ENCODE measurements at regions of chr19 and their contacts with region 1.

Region 1: GRCh38 chr19:13093407-13094105 is 9.1 kb downstream of the LYL1 start:
- DNase-seq: peak; percentile 52
- H3K4me3 ChIP-seq: no peak overlapping the region
- H3K27ac ChIP-seq: no peak overlapping the region
- H3K4me1 ChIP-seq: peaks cover 2% of the 10 kb centered on the region
- H3K27me3 ChIP-seq: no peaks in the 10 kb centered on the region
- CTCF ChIP-seq: peak; percentile 80 to 89

Region 2: DNA sequence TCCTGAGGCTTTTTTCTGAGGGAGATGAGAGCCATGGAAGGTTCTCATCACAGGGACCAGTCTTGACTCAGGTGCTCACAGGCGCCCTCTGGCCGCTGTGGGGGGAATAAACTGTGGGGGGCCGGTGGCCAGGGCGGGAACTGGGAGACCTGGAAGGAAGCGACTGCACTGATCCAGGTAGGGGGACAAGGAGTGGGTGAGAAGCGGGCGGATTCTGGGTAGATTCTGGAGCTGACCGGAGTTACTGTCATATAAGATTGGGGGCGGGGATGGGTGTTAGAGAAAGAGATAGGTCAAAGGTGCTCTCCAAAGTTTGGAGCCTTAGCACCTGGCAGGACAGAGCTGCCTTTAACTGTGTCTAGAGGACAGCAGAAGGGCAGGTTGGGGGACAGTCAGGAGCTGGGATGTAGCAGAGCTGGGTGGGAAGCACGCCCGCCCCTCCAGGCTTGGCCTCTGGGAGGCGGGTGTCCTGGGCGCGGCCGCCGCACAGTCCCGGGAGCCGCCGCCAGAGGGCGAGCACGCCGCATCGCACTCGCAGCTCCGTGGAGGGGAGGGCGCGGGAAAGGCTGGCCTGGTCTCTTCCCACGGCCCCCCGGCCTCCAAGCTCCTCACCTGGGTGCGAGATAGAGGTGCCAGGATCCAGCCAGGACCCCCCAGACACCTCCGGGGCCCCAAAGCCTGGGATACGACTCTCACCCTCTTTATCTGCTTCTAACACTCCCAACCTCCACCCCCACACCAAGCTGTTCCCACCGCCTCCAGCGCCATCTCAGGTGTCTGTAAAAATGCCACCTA is 128.3 kb before region 1 on chr19:
- CTCF ChIA-PET with region 1: interaction called, 15 read pairs
- dilution Hi-C with region 1: no loop called
- in situ Hi-C with region 1: loop called in 1 of 2 experiments (anchors 10 kb)
- intact Hi-C with region 1: no loop called
- DNase-seq: peak; percentile 65
- H3K4me3 ChIP-seq: peak overlapping the region; percentile 44 to 53 (median 47)
- H3K27ac ChIP-seq: peak overlapping the region; percentile 15
- H3K4me1 ChIP-seq: peaks cover 9% of the 10 kb centered on the region
- H3K27me3 ChIP-seq: no peaks in the 10 kb centered on the region
- CTCF ChIP-seq: peak; percentile 82 to 96

Region 3: DNA sequence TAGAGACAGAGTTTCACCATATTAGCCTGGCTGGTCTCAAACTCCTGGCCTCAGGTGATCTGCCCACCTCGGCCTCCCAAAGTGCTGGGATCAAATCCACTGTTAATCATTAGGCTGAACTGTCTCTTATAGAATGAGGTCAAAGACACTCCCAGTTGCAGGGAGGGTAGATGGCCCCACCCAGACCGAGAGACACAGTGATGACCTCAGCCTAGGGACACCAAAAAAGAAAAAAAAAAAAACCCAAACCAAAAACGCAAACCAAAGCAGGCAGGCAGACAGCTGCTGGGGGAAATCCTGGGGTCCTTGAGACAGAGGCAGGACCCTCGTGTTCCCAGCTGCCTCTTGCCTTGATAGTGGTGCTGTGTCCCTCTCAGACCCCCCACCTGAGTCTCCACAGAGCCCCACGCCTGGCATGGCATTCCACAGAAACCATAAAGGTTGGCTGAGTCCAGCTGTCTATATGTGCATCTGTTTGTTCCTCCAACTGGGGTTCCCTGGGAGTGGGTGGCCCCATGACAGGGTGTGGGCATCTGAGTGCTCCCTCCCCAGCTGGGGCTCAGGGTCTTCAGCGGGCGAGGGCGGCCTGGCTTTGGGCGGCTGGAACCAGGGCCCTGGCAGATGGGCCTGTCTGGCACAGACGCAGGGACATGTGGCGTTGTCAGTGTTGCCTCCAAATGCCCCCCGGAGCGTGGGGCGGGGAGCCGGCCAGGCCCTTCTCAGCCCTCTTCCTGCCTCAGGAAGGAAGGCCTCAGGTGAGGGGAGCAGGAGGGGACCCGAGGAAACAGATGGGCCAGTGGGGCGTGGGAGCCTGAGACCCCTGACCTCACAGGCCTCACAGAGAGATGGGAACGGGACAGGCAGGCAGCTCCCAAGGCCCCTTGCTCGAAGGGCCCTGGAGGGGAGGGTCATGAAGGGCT is 119.0 kb before region 1 on chr19:
- CTCF ChIA-PET with region 1: interaction called, 9 read pairs
- dilution Hi-C with region 1: no loop called
- in situ Hi-C with region 1: loop called (anchors 5 to 10 kb)
- intact Hi-C with region 1: loop called (anchors 1 kb)
- DNase-seq: no peak
- H3K4me3 ChIP-seq: no peak overlapping the region
- H3K27ac ChIP-seq: no peak overlapping the region
- H3K4me1 ChIP-seq: no peaks in the 10 kb centered on the region
- H3K27me3 ChIP-seq: peaks cover 3% of the 10 kb centered on the region
- CTCF ChIP-seq: no peak

Region 4: DNA sequence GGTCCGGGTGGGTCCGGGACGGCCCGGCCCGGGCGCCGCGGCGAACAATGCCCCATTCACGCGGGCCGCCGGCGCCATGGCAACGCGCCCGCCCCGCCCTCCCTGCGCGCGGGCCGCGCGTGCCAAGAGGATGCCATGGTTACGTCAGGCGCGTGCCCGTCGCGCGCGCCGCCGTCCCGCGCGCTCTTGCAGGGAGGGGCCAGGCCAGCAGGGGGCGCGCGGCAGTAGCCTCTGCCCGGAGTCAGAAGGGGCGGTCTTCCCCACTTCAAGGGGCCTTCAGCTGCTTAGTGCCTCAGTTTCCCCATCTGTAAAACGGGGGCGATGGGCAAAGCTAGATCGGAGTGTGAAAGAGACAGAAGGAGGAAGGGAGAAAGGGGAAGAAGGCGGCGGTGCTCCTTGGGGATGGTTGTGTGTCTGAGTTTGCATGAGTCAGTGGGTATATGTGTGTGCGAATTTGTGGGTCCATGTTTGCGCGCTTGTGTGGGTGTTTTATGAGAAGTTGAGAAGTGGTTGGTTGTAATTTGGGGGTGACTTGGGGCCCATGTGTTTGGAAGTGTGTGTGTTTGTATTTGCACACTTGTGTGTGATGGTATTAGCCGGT is 109.9 kb before region 1 on chr19:
- CTCF ChIA-PET with region 1: no interaction called
- dilution Hi-C with region 1: no loop called
- in situ Hi-C with region 1: loop called (anchors 5 to 10 kb)
- intact Hi-C with region 1: loop called (anchors 1 kb)
- DNase-seq: peak; percentile 73
- H3K4me3 ChIP-seq: peak overlapping the region in 1 of 3 experiments; percentile 34
- H3K27ac ChIP-seq: peak overlapping the region; percentile 50
- H3K4me1 ChIP-seq: peaks cover 5% of the 10 kb centered on the region
- H3K27me3 ChIP-seq: no peaks in the 10 kb centered on the region
- CTCF ChIP-seq: peak; percentile 73 to 91

Region 5: DNA sequence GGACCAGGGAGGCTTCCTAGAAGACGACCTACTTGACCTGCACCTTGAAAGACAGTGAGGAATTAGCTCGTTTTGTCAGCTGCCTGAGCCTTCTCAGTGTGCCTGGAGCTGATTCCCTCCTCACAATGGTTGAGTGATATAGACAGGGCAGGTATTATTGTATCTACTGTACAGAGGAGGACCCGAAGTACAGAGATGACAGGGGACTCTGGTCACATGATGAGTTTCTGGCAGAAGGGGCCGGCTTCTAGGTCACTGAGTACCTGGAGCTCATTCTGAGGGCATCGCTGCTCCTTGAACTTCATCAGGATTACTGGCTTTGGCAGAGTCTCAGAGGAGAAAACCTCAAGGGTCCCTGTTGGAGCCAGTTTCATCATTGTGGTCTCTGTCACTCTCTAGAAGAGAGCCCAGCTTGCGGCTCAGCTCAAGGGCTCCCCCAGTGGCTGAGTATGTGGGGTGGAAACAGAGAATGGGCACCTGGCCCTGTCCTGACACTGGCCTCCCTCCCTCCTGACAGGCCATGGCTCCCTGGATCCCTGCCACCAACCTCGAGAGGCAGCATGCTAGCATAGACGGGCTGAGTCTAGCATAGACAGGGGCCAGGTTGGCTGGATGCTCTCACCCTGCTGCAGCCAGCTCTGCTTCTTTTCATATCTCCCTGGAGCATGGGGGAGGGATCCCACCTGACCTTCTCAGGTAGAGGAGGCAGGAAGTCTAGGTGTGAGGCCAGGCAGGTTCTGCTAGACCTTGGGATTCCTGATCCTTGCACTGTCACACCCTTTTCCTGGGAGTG is 59.5 kb before region 1 on chr19:
- CTCF ChIA-PET with region 1: interaction called, 3 read pairs
- dilution Hi-C with region 1: no loop called
- in situ Hi-C with region 1: no loop called
- intact Hi-C with region 1: loop called (anchors 2 kb)
- DNase-seq: peak; percentile 68
- H3K4me3 ChIP-seq: peak overlapping the region in 1 of 3 experiments; percentile 8
- H3K27ac ChIP-seq: peak overlapping the region; percentile 97
- H3K4me1 ChIP-seq: peaks cover 93% of the 10 kb centered on the region
- H3K27me3 ChIP-seq: no peaks in the 10 kb centered on the region
- CTCF ChIP-seq: peak; percentile 92 to 94

Region 6: GRCh38 chr19:13060964-13061927 is 32.3 kb before region 1 on chr19:
- CTCF ChIA-PET with region 1: no interaction called
- dilution Hi-C with region 1: no loop called
- in situ Hi-C with region 1: no loop called
- intact Hi-C with region 1: loop called (anchors 2 kb)
- DNase-seq: peak; percentile 67
- H3K4me3 ChIP-seq: peak overlapping the region; percentile 20 to 23 (median 23)
- H3K27ac ChIP-seq: peak overlapping the region; percentile 77
- H3K4me1 ChIP-seq: peaks cover 35% of the 10 kb centered on the region
- H3K27me3 ChIP-seq: no peaks in the 10 kb centered on the region
- CTCF ChIP-seq: peak; percentile 84 to 97

Region 7: GRCh38 chr19:13117772-13118423 is 24.3 kb after region 1 on chr19 and contains the start of gene NACC1:
- CTCF ChIA-PET with region 1: interaction called, 18 read pairs
- dilution Hi-C with region 1: no loop called
- in situ Hi-C with region 1: no loop called
- intact Hi-C with region 1: no loop called
- DNase-seq: peak; percentile 85
- H3K4me3 ChIP-seq: peak within 1 kb of the TSS; percentile 90 to 100 (median 99)
- H3K27ac ChIP-seq: peak within 1 kb of the TSS; percentile 51
- H3K4me1 ChIP-seq: peaks cover 26% of the 10 kb centered on the region
- H3K27me3 ChIP-seq: no peaks in the 10 kb centered on the region
- CTCF ChIP-seq: no peak
- total RNA-seq, gene NACC1: 76.2 to 106 TPM